GM12878 (cell line): ENCODE measurements at regions of chr4 and their contacts with region 1.

Region 1: DNA sequence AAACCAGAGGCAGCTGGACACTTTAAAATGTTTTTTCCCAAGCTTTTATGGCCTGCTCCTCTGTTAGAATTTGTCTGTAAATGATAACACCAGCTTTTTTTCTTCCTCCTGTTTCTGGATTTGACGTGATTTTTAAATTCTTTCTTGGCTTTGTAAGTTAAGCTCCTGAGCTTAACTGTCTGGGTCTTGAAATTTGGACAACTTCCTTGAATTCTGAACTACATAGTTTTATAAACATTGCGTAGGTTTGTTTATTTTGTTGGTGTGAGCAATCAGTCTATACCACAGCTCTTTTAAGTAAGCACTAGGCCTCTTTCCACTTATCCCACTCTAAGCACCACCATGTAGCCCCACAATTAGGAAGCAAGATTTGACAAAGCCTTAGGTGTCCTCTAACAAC is 144.4 kb upstream of the GUCY1A1 start:
- DNase-seq: no peak
- ATAC-seq: no peak
- H3K4me3 ChIP-seq: no peak overlapping the region
- H3K27ac ChIP-seq: no peak overlapping the region
- H3K4me1 ChIP-seq: no peaks in the 10 kb centered on the region
- H3K27me3 ChIP-seq: peaks cover 0 to 3% of the 10 kb centered on the region in 2 experiments; a peak in 1 of 4 replicates
- CTCF ChIP-seq: no peak
- EP300 ChIP-seq: no peak
- POLR2A ChIP-seq: no peak
- RAD21 ChIP-seq: no peak

Region 2: DNA sequence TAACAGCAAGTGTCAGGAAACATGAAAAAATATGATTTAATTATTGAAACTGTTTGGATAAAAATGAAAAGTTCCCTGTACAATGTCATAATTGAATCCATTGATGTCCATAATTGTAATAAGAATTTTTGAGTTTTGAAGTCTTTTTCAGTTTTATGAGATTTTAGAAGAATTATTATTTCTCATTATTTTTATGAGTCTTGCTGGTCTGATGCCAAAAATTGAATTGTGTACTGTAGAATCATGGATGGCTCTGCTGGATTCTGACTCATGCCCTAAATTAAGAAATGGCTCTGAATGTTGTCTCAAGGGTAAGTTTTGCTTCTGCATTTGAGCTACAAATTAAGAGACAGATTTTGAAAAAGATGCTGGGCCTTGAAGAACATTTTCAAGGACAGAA is 12.6 kb before region 1 on chr4:
- CTCF ChIA-PET with region 1: interaction called, 3 read pairs
- POLR2A ChIA-PET with region 1: interaction called, 3 read pairs
- RAD21 ChIA-PET with region 1: no interaction called
- SMC1A ChIA-PET with region 1: interaction called, 11 read pairs
- in situ Hi-C with region 1: no loop called
- intact Hi-C with region 1: no loop called
- DNase-seq: no peak
- ATAC-seq: no peak
- H3K4me3 ChIP-seq: no peak overlapping the region
- H3K27ac ChIP-seq: no peak overlapping the region
- H3K4me1 ChIP-seq: no peaks in the 10 kb centered on the region
- H3K27me3 ChIP-seq: no peaks in the 10 kb centered on the region; a peak in 1 of 4 replicates
- CTCF ChIP-seq: no peak
- EP300 ChIP-seq: no peak
- POLR2A ChIP-seq: no peak
- RAD21 ChIP-seq: no peak

Region 3: DNA sequence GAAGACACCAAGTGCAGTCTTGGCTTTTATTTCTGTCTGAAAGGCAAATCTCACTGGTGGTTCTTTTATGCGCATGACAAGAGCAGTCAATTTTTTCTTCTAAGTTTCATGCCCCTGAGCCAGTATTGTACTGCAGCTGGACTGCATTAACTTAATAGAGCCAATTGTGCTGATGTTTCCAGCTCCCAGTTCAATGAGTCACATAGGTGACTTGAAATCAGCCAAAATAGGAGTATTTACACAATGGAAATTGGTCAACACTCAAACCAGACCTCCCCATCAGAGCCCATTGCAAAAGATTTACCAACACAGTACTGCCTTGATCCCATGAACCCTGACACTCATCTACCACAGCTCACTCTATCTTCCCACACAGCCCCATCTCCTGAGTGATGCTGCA is 44.2 kb after region 1 on chr4:
- CTCF ChIA-PET with region 1: no interaction called
- POLR2A ChIA-PET with region 1: no interaction called
- RAD21 ChIA-PET with region 1: no interaction called
- SMC1A ChIA-PET with region 1: no interaction called
- in situ Hi-C with region 1: no loop called
- intact Hi-C with region 1: no loop called
- DNase-seq: no peak
- ATAC-seq: no peak
- H3K4me3 ChIP-seq: no peak overlapping the region
- H3K27ac ChIP-seq: no peak overlapping the region
- H3K4me1 ChIP-seq: no peaks in the 10 kb centered on the region
- H3K27me3 ChIP-seq: no peaks in the 10 kb centered on the region
- CTCF ChIP-seq: no peak
- EP300 ChIP-seq: no peak
- POLR2A ChIP-seq: no peak
- RAD21 ChIP-seq: no peak